Activated CD4-positive, alpha-beta T cell treated with anti-CD3 and anti-CD28 coated beads, Interleukin-2, amount 10 ng/mL, durations not matched to agents 7 days and 5 days (primary cell): ENCODE measurements at regions of chr16 and their contacts with region 1.

Region 1: GRCh38 chr16:30602616-30603277 is 7.4 kb downstream of the ZNF689 start:
- DNase-seq: no peak
- H3K4me3 Mint-ChIP-seq: no peak overlapping the region
- H3K27ac Mint-ChIP-seq: no peak overlapping the region
- H3K4me1 Mint-ChIP-seq: peaks cover 15% of the 10 kb centered on the region
- H3K27me3 Mint-ChIP-seq: no peaks in the 10 kb centered on the region

Region 2: GRCh38 chr16:30585400-30586189 is 17.2 kb before region 1 on chr16 and contains the start of gene ZNF785:
- CTCF ChIA-PET with region 1: interaction called, 13 read pairs
- POLR2A ChIA-PET with region 1: no interaction called
- DNase-seq: peak; percentile 98
- H3K4me3 Mint-ChIP-seq: peak within 1 kb of the TSS; percentile 87
- H3K27ac Mint-ChIP-seq: peak within 1 kb of the TSS; percentile 91
- H3K4me1 Mint-ChIP-seq: peaks cover 37% of the 10 kb centered on the region
- H3K27me3 Mint-ChIP-seq: no peaks in the 10 kb centered on the region
- total RNA-seq, gene ZNF785: 17.0 to 18.3 TPM

Region 3: GRCh38 chr16:30650369-30651123 is 47.8 kb after region 1 on chr16 and contains the start of gene PRR14:
- CTCF ChIA-PET with region 1: no interaction called
- POLR2A ChIA-PET with region 1: no interaction called
- DNase-seq: peak; percentile 100
- H3K4me3 Mint-ChIP-seq: peak within 1 kb of the TSS; percentile 100
- H3K27ac Mint-ChIP-seq: peak within 1 kb of the TSS; percentile 99
- H3K4me1 Mint-ChIP-seq: peaks cover 41% of the 10 kb centered on the region
- H3K27me3 Mint-ChIP-seq: peaks cover 2% of the 10 kb centered on the region
- total RNA-seq, gene PRR14: 78.6 to 80.1 TPM

Region 4: DNA sequence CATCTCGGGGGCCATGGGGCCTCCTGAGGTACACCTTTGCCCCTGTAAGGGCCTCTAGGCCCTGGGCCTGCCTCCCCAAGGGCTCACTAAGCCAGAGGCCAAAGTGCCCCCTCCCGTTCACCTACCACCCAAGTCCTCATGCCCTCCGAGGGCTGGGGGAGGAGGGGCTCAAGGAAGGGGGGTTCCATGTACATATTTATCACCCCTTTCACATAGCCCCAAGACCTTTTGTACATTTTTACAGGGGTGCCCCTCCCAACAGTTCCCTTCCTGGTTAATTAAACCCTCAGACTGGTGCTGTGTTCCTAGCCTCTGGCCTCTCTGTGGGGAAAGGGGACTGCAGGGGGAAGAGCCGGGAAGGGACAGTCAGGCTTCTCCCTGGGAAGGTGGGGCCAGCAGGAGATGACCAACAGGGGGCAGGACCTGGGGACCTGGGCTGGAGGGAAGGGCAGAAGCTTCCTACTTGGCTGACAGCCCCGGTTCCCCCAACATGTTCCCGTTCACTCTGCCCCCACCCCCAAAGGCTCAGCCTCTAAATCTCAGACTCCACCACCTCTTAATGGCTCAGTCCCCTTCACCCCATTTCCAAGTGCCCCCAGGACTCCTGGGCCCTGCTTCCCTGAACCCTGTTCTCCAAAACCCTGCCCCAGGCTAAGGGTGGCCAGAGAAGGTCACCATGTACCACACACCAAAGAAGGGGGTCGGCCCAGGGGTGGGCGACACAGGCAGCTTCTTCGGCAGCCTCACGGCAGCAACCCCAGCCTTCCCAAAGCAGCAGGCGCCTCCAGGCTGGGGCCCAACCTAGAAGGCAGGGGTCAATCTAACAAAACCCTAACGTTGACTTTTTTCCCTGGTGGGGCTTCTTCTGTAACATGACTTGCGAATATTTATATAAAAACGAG is 67.4 kb after region 1 on chr16:
- CTCF ChIA-PET with region 1: no interaction called
- POLR2A ChIA-PET with region 1: no interaction called
- DNase-seq: no peak
- H3K4me3 Mint-ChIP-seq: no peak overlapping the region
- H3K27ac Mint-ChIP-seq: no peak overlapping the region
- H3K4me1 Mint-ChIP-seq: peaks cover 5% of the 10 kb centered on the region
- H3K27me3 Mint-ChIP-seq: no peaks in the 10 kb centered on the region